BJ (cell line): ENCODE measurements at regions of chr4 and their contacts with region 1.

Region 1: DNA sequence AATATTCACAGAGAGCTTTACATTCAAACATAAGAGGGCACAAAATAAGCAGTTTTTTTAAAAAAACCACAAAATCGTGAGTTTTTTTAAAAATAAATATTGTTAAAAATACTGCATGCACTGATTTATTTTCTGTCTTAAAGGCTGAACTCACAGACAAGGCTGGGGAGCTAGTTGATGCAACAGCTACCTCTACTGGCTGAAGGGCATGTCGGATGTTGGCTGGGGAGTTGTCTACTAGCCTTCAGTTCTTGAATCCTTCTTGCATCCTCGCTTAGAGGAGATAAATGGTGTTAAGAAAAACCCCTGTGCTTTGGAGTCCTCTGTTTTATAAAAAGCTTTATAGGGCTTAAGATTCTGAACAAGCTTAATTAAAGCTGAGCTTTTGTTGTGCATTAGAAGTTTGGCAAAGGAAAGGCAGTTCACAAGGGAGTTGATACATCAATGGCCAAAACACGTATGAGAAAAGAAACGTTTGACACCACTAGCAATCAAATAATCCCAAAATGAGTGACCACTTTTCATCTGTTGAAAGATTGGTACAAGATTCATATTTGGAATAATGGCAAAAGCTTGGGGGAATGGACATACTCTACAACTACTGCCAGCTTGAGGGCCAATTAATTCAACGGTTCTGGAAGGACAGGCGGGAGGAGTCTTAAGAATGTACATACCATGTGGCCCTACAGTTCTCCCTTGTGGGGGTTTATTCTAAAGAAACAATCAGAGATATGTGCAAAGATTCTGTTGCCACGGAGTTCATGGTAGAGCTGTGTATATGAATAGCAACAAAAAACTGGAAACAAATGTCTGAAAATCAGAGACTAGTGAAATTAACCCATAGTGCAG is 94.7 kb downstream of the SEL1L3 start:
- DNase-seq: no peak
- H3K4me3 ChIP-seq: no peak overlapping the region
- H3K27me3 ChIP-seq: no peaks in the 10 kb centered on the region
- CTCF ChIP-seq: peak; percentile 98

Region 2: DNA sequence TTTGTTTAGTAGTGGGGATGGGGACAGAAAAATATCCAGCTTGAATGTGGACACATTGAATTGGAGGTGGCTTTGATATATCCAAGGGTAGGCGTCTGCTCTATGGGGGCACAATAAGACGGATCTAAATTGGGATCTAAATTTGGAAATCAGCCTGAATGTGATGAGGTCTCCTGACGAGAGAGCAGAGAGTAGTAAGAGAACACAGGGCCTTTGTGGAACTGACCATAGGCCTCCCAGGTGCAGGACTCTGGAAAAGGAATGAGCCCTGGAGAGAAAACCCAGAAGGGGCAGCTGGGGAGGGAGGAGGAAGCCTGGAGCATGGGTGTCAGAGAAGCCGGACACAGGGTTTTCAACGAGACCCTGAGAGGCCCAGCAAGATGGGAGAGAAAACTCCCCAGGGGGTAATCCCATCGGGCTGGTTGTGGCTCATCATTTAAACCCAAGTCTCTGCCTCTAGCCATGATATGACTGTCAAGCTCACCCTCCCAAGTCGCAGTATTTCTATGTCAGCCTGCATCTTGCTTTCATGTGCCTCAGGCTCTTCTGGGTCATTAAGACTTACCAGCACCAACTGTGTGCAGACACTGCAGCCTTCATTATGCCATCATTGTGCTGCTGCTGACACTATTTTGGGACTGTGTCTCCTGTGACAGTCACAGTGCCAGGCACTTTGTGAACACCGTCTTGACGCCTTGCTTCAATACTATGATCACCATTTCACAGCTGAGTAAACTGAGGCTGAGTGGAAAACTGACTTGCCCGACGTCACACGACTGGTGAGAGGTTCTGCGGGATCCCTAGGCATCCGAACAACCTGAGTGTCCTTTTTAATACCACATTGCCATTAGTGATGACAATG is 333.9 kb before region 1 on chr4:
- CTCF ChIA-PET with region 1: interaction called, 325 read pairs
- POLR2A ChIA-PET with region 1: no interaction called
- DNase-seq: no peak
- H3K4me3 ChIP-seq: no peak overlapping the region
- H3K27me3 ChIP-seq: no peaks in the 10 kb centered on the region
- CTCF ChIP-seq: no peak

Region 3: DNA sequence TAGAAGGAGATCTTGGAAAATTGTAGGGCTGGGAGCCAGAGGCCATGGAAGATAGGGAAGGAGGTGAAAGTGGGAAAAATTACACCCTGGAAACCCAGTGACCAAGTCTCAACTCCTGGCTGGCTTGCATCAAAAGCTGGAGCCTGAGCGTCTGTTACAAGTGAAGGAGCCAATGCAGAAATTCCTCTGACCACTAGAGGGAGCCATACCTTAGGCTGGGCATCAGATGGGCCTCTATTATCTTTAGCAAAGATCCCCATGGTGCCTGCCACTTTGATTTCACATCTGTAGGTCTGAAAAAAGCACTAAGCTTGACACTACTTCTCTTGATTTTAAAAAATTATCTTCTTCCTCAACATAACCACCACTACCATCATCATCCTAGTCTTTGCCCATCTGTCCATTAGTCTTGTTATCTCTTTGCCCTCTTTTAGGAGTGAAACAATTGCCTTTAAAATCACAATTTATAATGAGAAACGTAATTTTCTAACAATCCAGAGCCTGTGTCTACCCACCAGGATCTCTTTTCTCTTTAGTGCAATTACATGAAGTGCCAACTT is 328.1 kb before region 1 on chr4:
- CTCF ChIA-PET with region 1: interaction called, 325 read pairs
- POLR2A ChIA-PET with region 1: no interaction called
- DNase-seq: no peak
- H3K4me3 ChIP-seq: no peak overlapping the region
- H3K27me3 ChIP-seq: no peaks in the 10 kb centered on the region; the same call in 1 of the 2 replicates
- CTCF ChIP-seq: peak; percentile 92

Region 4: DNA sequence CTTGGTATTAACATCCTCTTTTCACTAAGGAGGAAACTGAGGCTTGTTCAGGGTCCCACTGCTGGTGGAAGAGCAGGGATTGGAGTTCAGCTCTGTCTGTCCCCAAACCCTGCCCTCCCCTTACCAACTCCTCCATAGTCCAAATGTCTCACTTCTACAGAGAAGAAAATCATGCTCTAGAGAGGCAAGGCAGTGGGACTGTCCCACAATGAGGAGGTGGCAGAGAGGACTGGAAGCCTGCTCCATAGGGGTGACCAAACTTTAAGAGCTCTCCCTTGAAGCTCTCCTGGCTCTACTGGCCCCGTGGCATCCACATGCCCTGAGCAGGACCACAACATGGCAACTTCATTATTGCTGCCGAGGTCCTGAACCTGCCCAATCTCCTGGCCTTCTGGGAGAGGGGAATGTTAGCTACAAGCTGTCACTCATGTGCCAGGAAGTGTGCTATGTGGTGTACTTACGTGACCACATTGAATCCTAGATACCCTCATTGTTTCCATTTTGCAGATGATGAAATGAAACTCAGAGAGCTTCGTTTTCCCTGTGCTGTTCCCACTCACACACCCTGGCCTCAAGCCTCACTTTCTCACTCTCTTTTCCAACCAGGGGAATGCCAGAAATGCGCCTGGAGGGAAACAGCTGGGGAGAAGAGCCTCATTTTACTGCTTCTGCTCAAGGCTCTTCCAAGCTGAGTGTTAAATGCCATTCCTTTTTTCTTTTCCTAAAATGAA is 319.6 kb before region 1 on chr4:
- CTCF ChIA-PET with region 1: interaction called, 325 read pairs
- POLR2A ChIA-PET with region 1: no interaction called
- DNase-seq: peak; percentile 93
- H3K4me3 ChIP-seq: no peak overlapping the region
- H3K27me3 ChIP-seq: no peaks in the 10 kb centered on the region; the same call in 1 of the 2 replicates
- CTCF ChIP-seq: no peak

Region 5: DNA sequence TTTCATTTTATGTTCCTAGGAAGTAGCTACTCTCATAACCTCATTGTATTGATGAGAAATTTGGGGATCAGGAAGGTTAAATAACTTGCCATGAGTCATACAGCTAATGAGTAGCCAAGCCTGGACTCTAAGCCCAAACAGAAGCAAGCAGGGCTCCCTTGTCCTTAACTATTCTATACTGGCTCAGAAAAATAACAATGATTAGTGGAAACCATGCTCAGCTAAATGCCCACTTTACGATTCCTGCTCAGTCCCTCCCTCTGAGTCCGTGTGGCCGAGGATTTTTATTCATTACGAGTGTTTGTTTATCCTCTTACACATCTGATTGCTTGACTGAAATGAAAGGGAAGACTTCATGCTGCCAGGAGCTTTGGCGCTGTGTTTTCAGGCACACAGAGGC is 11.6 kb before region 1 on chr4:
- CTCF ChIA-PET with region 1: interaction called, 19 read pairs
- POLR2A ChIA-PET with region 1: no interaction called
- DNase-seq: no peak
- H3K4me3 ChIP-seq: no peak overlapping the region
- H3K27me3 ChIP-seq: no peaks in the 10 kb centered on the region
- CTCF ChIP-seq: no peak